ENCODE measurements at regions of chr2 and their contacts with region 1.

Region 1: GRCh38 chr2:19851116-19851695 is 50.6 kb downstream of the TTC32 start:
- DNase-seq: no peak
- ATAC-seq: no peak
- H3K4me3 ChIP-seq: no peak overlapping the region
- H3K27ac ChIP-seq: no peak overlapping the region
- H3K4me1 ChIP-seq: peaks cover 8 to 13% of the 10 kb centered on the region in 2 donors
- H3K27me3 ChIP-seq: no peaks in the 10 kb centered on the region
- CTCF ChIP-seq: no peak
- POLR2A ChIP-seq: no peak

Region 2: GRCh38 chr2:18536100-18536499 is 1315.1 kb before region 1 on chr2:
- in situ Hi-C with region 1: loop called in 1 of 4 experiments (anchors 10 kb)
- intact Hi-C with region 1: no loop called
- DNase-seq: no peak
- ATAC-seq: no peak
- H3K4me3 ChIP-seq: no peak overlapping the region
- H3K27ac ChIP-seq: no peak overlapping the region
- H3K4me1 ChIP-seq: no peaks in the 10 kb centered on the region
- H3K27me3 ChIP-seq: no peaks in the 10 kb centered on the region
- CTCF ChIP-seq: no peak
- POLR2A ChIP-seq: no peak

Region 3: DNA sequence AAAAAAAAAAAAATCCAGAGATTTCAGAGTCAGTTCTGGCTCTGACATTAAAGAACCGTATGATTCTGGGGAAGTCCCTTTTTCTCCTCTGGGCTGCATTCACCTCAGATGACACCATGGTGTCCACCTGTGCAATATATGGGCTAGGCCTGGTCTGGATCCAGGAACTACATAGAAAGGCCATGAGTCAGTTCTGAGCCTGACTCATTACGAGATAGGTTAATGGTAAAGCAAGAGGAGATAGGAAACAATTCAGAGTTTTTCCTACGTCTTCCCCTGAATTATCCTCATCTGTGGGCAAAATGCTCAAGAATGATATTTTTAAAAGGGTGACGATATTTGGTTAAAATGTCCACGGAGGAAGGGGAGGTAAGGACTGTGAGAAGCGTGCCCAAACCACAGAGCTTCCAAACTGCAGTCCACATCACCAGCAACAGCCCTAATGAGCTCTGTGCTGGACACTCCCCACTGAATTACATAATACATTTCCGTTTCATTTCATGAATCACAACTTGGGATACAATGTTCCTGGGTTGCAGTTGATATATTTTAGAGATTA is 312.7 kb before region 1 on chr2:
- in situ Hi-C with region 1: no loop called
- intact Hi-C with region 1: loop called (anchors 5 kb)
- DNase-seq: peak; percentile 45 to 61
- ATAC-seq: peak; percentile 96 to 98
- H3K4me3 ChIP-seq: no peak overlapping the region
- H3K27ac ChIP-seq: peak overlapping the region; percentile 13 to 63 (median 54)
- H3K4me1 ChIP-seq: peaks cover 11 to 12% of the 10 kb centered on the region in 2 donors
- H3K27me3 ChIP-seq: no peaks in the 10 kb centered on the region
- CTCF ChIP-seq: no peak
- POLR2A ChIP-seq: no peak

Region 4: DNA sequence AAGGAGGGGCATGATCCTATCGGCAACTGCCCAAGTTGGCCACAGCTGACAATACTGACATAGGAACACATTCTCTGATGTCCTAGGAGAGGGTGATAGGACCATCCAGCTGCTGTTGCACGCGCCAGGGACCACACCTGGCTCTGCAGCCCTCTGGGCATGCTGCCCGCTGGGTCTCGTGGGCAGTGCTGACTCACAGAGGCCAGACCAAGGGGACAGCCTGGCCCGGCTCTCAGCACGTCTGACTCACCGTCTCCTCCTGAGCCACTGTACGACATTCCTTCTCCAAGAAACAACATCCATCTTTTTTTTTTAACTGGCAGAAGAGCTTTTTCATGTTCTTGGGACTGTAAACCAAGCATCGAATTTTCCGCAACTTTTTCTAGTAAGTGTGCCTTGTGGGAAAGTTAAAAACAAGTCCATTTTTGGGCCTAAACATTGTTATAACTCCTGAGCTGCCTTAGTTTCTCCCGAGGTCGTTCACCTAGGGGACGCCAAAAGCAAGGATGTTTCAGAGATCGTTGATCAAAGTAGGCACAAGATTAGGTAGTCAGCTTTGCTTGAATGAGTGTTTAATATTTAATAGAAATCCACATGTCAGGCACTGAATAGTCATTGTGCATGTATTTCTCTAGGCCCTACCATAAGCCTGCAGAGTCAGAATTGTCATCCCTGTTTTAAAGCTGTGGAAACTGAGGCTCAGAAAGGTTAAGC is 49.7 kb before region 1 on chr2:
- in situ Hi-C with region 1: no loop called
- intact Hi-C with region 1: loop called (anchors 1 kb)
- DNase-seq: peak; percentile 94 to 98
- ATAC-seq: peak; percentile 83 to 93
- H3K4me3 ChIP-seq: no peak overlapping the region
- H3K27ac ChIP-seq: peak overlapping the region; percentile 75 to 89 (median 82)
- H3K4me1 ChIP-seq: peaks cover 15 to 25% of the 10 kb centered on the region in 2 donors
- H3K27me3 ChIP-seq: no peaks in the 10 kb centered on the region
- CTCF ChIP-seq: no peak
- POLR2A ChIP-seq: no peak